RWPE1 (cell line): ENCODE measurements at regions of chr1 and their contacts with region 1.

Region 1: GRCh38 chr1:209989525-209989924 is 51.5 kb downstream of the SYT14 start:
- DNase-seq: peak; percentile 26
- H3K27ac ChIP-seq: no peak overlapping the region
- CTCF ChIP-seq: peak; percentile 36

Region 2: DNA sequence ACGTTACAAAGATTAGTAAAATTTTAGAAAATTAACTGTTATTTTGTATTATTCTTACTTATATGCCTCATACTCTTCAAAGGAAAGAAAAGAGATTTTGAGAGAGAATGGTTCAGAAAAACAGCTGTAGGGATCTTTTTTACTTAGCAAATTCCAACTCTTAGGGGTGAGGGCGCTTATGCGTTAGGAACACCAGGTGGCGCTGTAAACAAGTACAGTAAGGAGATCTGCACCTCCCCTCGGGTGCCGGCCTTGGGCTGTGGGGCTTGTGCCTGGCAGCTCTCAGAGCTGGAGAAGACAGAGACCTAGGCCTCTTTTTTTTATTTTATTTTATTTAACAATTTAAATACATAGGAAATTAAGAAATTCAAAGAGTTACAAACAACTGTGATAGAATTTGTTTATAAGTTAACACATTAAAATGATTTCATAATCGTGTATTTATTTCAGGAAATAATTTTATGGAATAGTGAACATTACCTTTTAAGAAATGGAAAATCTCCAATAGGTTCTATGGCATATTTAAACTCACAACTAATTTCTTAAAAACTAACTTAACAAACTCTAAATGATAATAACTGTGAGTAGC is 129.1 kb before region 1 on chr1:
- CTCF ChIA-PET with region 1: interaction called, 26 read pairs
- POLR2A ChIA-PET with region 1: no interaction called
- DNase-seq: peak; percentile 83
- H3K27ac ChIP-seq: no peak overlapping the region
- CTCF ChIP-seq: peak; percentile 89